Gastrocnemius medialis (tissue), 4 donors: ENCODE measurements at regions of chr1 and their contacts with region 1.

Region 1: GRCh38 chr1:25247024-25247828 is at the start of gene RSRP1:
- DNase-seq: peak; percentile 99
- ATAC-seq: peak; percentile 90 to 98
- H3K4me3 ChIP-seq: peak within 1 kb of the TSS; percentile 85 to 97 (median 96)
- H3K27ac ChIP-seq: peak within 1 kb of the TSS; percentile 99 to 100 (median 100)
- H3K4me1 ChIP-seq: peaks cover 26% of the 10 kb centered on the region in 2 donors
- H3K27me3 ChIP-seq: no peaks in the 10 kb centered on the region
- CTCF ChIP-seq: peak in 2 of 5 experiments; percentile 18 to 25
- POLR2A ChIP-seq: peak; percentile 99 to 100
- total RNA-seq, gene RSRP1: 10.3 to 43.0 (median 20.9) TPM

Region 2: GRCh38 chr1:25232027-25232865 is 15.0 kb before region 1 on chr1 and contains the start of gene SYF2:
- in situ Hi-C with region 1: no loop called
- intact Hi-C with region 1: loop called (anchors 1 kb)
- DNase-seq: peak; percentile 90 to 93
- ATAC-seq: peak; percentile 84 to 90
- H3K4me3 ChIP-seq: peak within 1 kb of the TSS; percentile 61 to 89 (median 78)
- H3K27ac ChIP-seq: peak within 1 kb of the TSS; percentile 86 to 97 (median 92)
- H3K4me1 ChIP-seq: peaks cover 35 to 43% of the 10 kb centered on the region in 2 donors
- H3K27me3 ChIP-seq: no peaks in the 10 kb centered on the region
- CTCF ChIP-seq: no peak
- POLR2A ChIP-seq: peak; percentile 81 to 85
- total RNA-seq, gene SYF2: 49.1 to 67.4 (median 58.3) TPM

Region 3: GRCh38 chr1:25338188-25338981 is 91.2 kb after region 1 on chr1 and contains the start of gene TMEM50A:
- in situ Hi-C with region 1: loop called in 2 of 4 experiments (anchors 10 kb)
- intact Hi-C with region 1: loop called (anchors 2 kb)
- DNase-seq: peak; percentile 77 to 90
- ATAC-seq: peak; percentile 89 to 93
- H3K4me3 ChIP-seq: peak within 1 kb of the TSS; percentile 79 to 96 (median 94)
- H3K27ac ChIP-seq: peak within 1 kb of the TSS; percentile 95 to 100 (median 96)
- H3K4me1 ChIP-seq: peaks cover 17 to 20% of the 10 kb centered on the region in 2 donors
- H3K27me3 ChIP-seq: no peaks in the 10 kb centered on the region
- CTCF ChIP-seq: no peak
- POLR2A ChIP-seq: peak; percentile 79 to 91
- total RNA-seq, gene TMEM50A: 28.4 to 47.9 (median 43.0) TPM